ENCODE measurements at regions of chr11 and their contacts with region 1.

Region 1: DNA sequence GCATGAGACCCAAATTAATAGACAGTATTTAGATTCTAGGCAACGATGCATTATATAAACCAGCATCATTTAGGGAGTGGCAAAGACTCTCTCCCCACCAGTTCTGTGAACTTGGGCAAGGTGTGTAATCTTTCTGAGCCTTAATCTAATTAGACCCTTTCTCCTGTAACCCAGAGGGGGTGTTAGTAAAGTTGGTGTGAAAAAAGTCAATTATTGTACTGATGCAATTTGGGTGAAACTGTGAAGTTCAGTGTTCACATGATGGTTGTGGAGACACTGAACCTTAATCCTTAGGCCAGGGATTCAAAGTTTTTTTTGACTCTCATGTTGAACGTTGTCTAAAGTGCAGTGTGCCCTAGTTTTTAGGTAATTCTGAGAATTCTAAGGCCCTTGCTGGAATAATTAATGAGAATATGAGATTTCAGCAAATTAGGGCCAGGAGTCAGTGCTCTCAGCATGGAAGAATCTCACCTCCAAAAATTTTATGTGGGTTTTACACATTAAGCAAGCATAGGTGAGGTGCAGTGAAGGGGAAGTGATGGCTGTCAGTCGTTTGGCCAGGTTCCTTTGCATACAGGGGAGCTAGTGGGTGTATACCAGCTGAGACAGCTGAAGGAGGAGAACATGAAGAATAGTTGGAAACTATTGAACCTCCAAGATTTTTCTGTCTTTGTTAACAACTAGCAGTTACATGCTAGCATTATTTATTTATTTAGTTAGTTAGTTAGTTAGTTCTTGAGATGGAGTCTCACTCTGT is 94.2 kb downstream of the PTPRJ start:
- DNase-seq: no peak
- H3K4me3 ChIP-seq: no peak overlapping the region
- H3K27ac ChIP-seq: no peak overlapping the region
- H3K4me1 ChIP-seq: no peaks in the 10 kb centered on the region
- H3K27me3 ChIP-seq: no peaks in the 10 kb centered on the region
- CTCF ChIP-seq: no peak

Region 2: GRCh38 chr11:48063424-48063978 is 11.1 kb before region 1 on chr11:
- CTCF ChIA-PET with region 1: no interaction called
- POLR2A ChIA-PET with region 1: interaction called, 16 read pairs
- intact Hi-C with region 1: no loop called
- DNase-seq: no peak
- H3K4me3 ChIP-seq: no peak overlapping the region
- H3K27ac ChIP-seq: no peak overlapping the region
- H3K4me1 ChIP-seq: peaks cover 8% of the 10 kb centered on the region
- H3K27me3 ChIP-seq: no peaks in the 10 kb centered on the region
- CTCF ChIP-seq: no peak

Region 3: GRCh38 chr11:48116437-48117228 is 42.0 kb after region 1 on chr11:
- CTCF ChIA-PET with region 1: no interaction called
- POLR2A ChIA-PET with region 1: no interaction called
- intact Hi-C with region 1: no loop called
- DNase-seq: peak; percentile 50
- H3K4me3 ChIP-seq: no peak overlapping the region
- H3K27ac ChIP-seq: no peak overlapping the region
- H3K4me1 ChIP-seq: no peaks in the 10 kb centered on the region
- H3K27me3 ChIP-seq: no peaks in the 10 kb centered on the region
- CTCF ChIP-seq: peak; percentile 62